Sigmoid colon (tissue), 7 donors: ENCODE measurements at regions of chr10 and their contacts with region 1.

Region 1: DNA sequence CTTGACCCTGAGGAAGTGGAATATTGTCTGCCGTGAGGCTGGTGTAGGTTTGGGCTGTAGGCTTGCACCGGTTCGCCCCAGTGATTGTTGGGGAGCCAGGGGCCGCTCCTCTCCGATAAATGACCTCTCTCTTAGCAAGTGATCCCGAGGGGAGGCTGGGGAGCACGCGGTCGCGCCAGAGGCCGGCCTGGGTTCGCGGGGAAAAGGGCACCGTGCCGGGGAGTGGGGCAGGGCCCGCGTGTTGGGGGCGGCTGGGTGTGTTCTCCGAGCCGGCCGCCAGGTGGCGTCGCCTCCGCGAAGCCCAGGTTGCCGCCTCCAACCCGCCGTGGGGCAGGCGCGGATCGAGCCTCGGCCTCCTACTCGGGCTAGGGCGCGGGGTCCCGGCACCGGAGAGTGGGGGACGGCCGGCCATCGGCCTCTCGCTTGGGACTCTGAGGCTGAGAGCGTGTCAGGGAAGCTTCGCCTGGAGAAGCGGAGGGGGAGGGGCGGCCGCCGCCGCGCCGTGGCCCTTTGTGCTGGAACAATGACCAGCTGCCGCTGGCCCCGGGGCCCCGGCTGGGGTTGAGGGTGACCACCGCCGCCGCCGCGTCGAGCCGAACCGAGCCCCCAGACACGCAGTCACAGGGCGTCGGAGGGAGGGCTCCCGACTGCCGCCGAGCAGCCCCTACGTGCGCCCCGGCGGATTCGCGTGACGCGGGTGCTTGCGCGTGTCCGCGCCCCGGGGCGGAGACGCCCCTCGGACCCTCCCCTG is 442 bp upstream of the LZTS2 start:
- DNase-seq: peak; percentile 93
- H3K4me3 ChIP-seq: peak overlapping the region; percentile 80 to 90 (median 90)
- H3K27ac ChIP-seq: peak overlapping the region; percentile 99 to 100 (median 100)
- H3K4me1 ChIP-seq: peaks cover 0 to 62% (median 53%) of the 10 kb centered on the region in 4 donors
- H3K27me3 ChIP-seq: no peaks in the 10 kb centered on the region
- CTCF ChIP-seq: peak; percentile 96 to 97 (median 96)
- EP300 ChIP-seq: no peak
- POLR2A ChIP-seq: peak; percentile 70 to 75

Region 2: DNA sequence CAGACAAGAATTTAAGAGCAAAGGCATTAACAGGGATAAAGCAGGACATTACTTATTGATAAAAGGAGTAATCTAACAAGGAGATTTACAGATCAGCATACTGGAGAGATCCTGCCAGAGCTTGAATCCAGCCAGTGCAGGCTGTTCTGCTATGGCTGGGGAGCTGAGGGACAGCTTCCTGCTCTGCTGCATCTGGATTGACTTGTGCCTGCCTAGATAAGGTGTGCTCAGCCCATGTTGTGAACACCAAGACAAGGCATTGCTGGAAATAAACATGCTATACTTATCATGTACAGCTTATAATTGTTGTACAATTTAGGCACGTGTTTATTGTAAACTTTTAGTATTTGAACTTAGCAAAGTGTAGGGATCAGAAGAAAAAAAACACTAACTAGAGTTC is 391.7 kb before region 1 on chr10:
- intact Hi-C with region 1: no loop called
- DNase-seq: no peak
- H3K4me3 ChIP-seq: no peak overlapping the region
- H3K27ac ChIP-seq: no peak overlapping the region
- H3K4me1 ChIP-seq: no peaks in the 10 kb centered on the region
- H3K27me3 ChIP-seq: peaks cover 0 to 17% (median 0%) of the 10 kb centered on the region in 3 donors
- CTCF ChIP-seq: no peak
- EP300 ChIP-seq: no peak
- POLR2A ChIP-seq: no peak

Region 3: GRCh38 chr10:100912605-100913469 is 86.3 kb before region 1 on chr10 and contains the start of gene SLF2:
- intact Hi-C with region 1: loop called (anchors 5 kb)
- DNase-seq: peak; percentile 99
- H3K4me3 ChIP-seq: peak within 1 kb of the TSS; percentile 93 to 99 (median 98)
- H3K27ac ChIP-seq: peak within 1 kb of the TSS; percentile 96 to 98 (median 97)
- H3K4me1 ChIP-seq: peaks cover 0 to 37% (median 27%) of the 10 kb centered on the region in 4 donors
- H3K27me3 ChIP-seq: no peaks in the 10 kb centered on the region
- CTCF ChIP-seq: no peak
- EP300 ChIP-seq: peak in 1 of 4 donors; percentile 28
- POLR2A ChIP-seq: peak; percentile 63 to 83
- total RNA-seq, gene SLF2: 31.8 to 49.9 (median 38.7) TPM

Region 4: GRCh38 chr10:101272229-101272868 is 273.2 kb after region 1 on chr10:
- intact Hi-C with region 1: no loop called
- DNase-seq: peak; percentile 70
- H3K4me3 ChIP-seq: no peak overlapping the region
- H3K27ac ChIP-seq: no peak overlapping the region
- H3K4me1 ChIP-seq: no peaks in the 10 kb centered on the region
- H3K27me3 ChIP-seq: peaks cover 0 to 27% (median 5%) of the 10 kb centered on the region in 3 donors
- CTCF ChIP-seq: peak; percentile 36 to 62 (median 49)
- EP300 ChIP-seq: no peak
- POLR2A ChIP-seq: no peak